Sciatic nerve (tissue), 2 donors: ENCODE measurements at regions of chr3 and their contacts with region 1.

Region 1: GRCh38 chr3:36993326-36994283 is at the start of gene MLH1:
- DNase-seq: peak; percentile 99
- ATAC-seq: peak; percentile 98
- total RNA-seq, gene MLH1: 31.3 TPM

Region 2: DNA sequence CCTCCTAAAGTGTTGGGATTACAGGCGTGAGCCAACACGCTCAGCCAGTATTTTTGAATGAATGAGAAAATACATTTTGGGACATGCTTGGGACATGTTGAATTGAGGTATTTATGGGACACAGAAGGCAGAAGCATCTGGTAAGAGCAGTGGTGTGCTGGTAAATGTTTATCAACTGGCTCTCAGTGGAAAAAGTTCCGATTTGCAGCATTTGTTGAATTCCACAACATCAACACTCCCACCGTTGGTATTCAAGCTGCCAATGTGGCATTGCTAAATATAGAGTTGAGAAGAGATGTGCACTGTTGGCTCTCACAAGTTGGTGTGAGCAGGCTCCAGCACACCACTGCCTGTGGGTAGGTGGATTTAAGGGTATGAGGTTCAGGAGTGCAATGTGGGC is 216.6 kb after region 1 on chr3:
- intact Hi-C with region 1: loop called (anchors 5 kb)
- DNase-seq: no peak
- ATAC-seq: no peak